Endothelial cell of umbilical vein (primary cell): ENCODE measurements at regions of chr1 and their contacts with region 1.

Region 1: GRCh38 chr1:9004700-9005394 is 21.4 kb downstream of the SLC2A7 start:
- DNase-seq: peak; percentile 85
- H3K4me3 ChIP-seq: no peak overlapping the region
- H3K27ac ChIP-seq: no peak overlapping the region
- H3K4me1 ChIP-seq: no peaks in the 10 kb centered on the region
- H3K27me3 ChIP-seq: peaks cover 0 to 4% of the 10 kb centered on the region in 2 experiments
- CTCF ChIP-seq: peak; percentile 91 to 96
- POLR2A ChIP-seq: no peak

Region 2: DNA sequence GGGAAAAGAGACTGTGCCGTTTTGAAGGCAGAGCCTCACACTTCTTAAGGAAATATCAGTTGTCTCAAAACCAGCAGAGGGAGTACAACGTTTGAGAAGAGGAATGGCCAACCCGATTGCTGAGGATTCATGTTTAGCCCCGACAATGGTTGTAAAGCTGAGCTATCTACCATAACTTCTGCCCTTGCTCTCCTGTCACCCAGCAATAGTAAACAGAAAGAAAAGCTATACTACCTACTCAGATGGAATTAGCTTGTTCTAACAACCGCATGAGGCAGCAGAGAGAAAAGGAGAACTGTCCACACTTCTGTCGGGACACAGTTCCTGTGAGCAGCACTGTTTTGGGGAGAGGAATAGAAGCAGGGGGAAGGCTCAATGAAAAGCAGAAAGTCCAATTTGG is 595.7 kb before region 1 on chr1:
- CTCF ChIA-PET with region 1: no interaction called
- POLR2A ChIA-PET with region 1: no interaction called
- dilution Hi-C with region 1: no loop called
- intact Hi-C with region 1: no loop called
- DNase-seq: peak; percentile 76
- H3K4me3 ChIP-seq: no peak overlapping the region
- H3K27ac ChIP-seq: peak overlapping the region; percentile 62
- H3K4me1 ChIP-seq: peaks cover 53% of the 10 kb centered on the region
- H3K27me3 ChIP-seq: no peaks in the 10 kb centered on the region
- CTCF ChIP-seq: peak; percentile 37 to 42
- POLR2A ChIP-seq: no peak

Region 3: DNA sequence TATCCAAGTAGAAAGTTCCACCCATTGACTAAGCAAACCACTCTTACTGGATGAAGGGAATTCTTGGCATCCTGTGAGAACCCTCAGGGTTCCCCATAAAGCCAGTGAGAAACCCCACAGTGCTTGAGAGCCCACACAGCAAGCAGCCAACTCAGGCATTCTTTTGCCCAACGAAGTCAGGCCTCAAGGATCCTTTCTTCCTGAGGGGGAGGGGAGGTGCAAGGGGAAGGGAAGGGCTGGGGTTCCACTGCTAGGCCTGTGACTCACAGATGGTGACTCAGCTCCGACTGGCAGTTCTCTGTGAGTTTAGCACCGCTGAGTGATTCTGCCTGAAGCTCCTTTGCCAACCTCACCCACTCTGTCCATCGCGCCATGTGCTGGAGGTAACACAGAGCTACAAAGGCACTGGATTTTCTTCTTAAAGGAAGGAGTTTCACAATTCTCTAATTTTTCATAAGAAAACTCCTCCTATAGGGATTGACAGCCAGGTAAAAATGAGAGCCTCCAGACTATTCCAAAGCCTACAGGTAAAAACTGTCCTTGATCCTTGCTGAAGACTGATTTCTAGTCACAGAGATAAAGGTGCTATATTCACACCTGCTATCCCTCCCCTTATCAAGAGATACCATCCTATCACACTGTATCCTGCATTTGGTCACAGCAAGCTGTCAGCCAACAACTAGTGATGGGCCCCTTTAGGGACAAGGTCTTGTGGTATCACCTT is 131.2 kb before region 1 on chr1:
- CTCF ChIA-PET with region 1: interaction called, 23 read pairs
- POLR2A ChIA-PET with region 1: no interaction called
- dilution Hi-C with region 1: no loop called
- intact Hi-C with region 1: no loop called
- DNase-seq: peak; percentile 97
- H3K4me3 ChIP-seq: peak overlapping the region in 1 of 3 experiments; percentile 25
- H3K27ac ChIP-seq: peak overlapping the region; percentile 48
- H3K4me1 ChIP-seq: peaks cover 50% of the 10 kb centered on the region
- H3K27me3 ChIP-seq: no peaks in the 10 kb centered on the region
- CTCF ChIP-seq: no peak
- POLR2A ChIP-seq: peak; percentile 58

Region 4: GRCh38 chr1:8925406-8925805 is 79.4 kb before region 1 on chr1:
- CTCF ChIA-PET with region 1: interaction called, 371 read pairs
- POLR2A ChIA-PET with region 1: no interaction called
- dilution Hi-C with region 1: no loop called
- intact Hi-C with region 1: no loop called
- DNase-seq: no peak
- H3K4me3 ChIP-seq: no peak overlapping the region
- H3K27ac ChIP-seq: no peak overlapping the region
- H3K4me1 ChIP-seq: no peaks in the 10 kb centered on the region
- H3K27me3 ChIP-seq: peaks cover 4 to 14% of the 10 kb centered on the region in 2 experiments
- CTCF ChIP-seq: no peak
- POLR2A ChIP-seq: no peak

Region 5: DNA sequence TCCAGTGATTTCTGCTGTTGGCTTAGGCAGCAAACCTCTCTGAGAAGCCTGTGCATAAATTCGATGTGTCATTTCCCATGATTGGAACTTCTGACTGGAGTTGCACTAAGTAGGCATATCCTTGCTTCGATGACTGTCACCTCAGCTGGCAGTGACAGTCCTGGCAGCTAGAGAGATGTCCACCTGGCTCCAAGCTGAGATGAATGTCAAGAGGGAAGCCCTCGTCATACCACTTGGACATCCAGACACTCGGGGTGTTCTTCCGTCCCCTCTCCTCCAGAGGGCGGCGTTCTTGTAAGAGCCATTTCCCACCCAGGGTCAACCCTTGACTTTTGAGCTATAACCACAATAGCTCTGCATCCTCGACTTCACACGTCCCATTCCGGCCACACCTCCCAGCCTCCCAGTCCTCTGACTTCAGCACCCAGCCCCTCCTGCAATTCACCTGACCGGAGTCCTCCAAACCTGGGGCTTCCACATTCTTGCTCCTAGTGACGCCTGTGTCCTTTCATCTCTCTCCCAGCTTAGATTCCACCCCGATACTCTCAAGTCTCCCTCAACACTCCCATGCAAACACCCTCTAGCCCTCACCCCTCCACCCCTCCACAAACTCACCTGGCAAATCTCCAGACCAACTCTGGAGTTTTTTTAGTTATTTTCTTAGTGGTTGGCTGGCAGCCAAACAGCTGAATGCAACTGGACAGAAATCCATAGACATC is 41.9 kb before region 1 on chr1:
- CTCF ChIA-PET with region 1: interaction called, 55 read pairs
- POLR2A ChIA-PET with region 1: no interaction called
- dilution Hi-C with region 1: no loop called
- intact Hi-C with region 1: loop called (anchors 5 kb)
- DNase-seq: peak; percentile 40
- H3K4me3 ChIP-seq: no peak overlapping the region
- H3K27ac ChIP-seq: no peak overlapping the region
- H3K4me1 ChIP-seq: peaks cover 3% of the 10 kb centered on the region
- H3K27me3 ChIP-seq: no peaks in the 10 kb centered on the region
- CTCF ChIP-seq: peak; percentile 50 to 62
- POLR2A ChIP-seq: no peak

Region 6: GRCh38 chr1:9048551-9048950 is 43.7 kb after region 1 on chr1:
- CTCF ChIA-PET with region 1: interaction called, 13 read pairs
- POLR2A ChIA-PET with region 1: no interaction called
- dilution Hi-C with region 1: no loop called
- intact Hi-C with region 1: no loop called
- DNase-seq: no peak
- H3K4me3 ChIP-seq: no peak overlapping the region
- H3K27ac ChIP-seq: no peak overlapping the region
- H3K4me1 ChIP-seq: no peaks in the 10 kb centered on the region
- H3K27me3 ChIP-seq: peaks cover 6% of the 10 kb centered on the region in 2 experiments
- CTCF ChIP-seq: no peak
- POLR2A ChIP-seq: no peak

Region 7: DNA sequence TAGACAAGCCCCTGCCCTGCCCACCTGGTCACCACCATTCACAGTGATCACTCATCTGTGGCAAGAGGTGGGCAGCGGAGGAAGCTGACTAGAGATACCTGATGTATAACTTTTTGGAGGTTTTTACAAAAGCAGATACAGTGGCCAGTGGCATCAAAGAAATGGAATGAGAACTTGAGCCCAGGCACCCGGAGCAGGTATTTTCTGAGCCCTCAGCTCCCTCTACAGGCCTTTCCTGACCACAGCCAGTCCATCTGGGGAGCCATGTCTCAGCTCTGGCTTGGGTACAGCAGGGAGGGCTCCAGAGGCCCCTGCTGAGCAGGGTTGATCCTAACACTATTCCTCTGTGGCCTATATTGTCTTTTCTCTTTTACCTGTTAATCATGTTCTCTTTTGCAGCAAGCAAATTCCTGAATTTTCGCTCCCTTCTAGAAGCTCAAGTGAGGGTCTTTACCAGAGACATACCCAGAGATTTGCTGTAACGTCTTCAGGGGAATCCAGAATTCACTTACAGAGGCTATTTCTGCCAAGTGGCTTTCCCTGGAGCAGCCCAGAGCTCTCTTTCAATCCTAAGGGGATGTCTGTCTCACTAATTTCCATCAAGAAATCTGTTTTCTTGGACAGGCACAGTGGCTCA is 96.8 kb after region 1 on chr1:
- CTCF ChIA-PET with region 1: interaction called, 137 read pairs
- POLR2A ChIA-PET with region 1: no interaction called
- dilution Hi-C with region 1: no loop called
- intact Hi-C with region 1: loop called (anchors 1 kb)
- DNase-seq: peak; percentile 51
- H3K4me3 ChIP-seq: no peak overlapping the region
- H3K27ac ChIP-seq: no peak overlapping the region
- H3K4me1 ChIP-seq: no peaks in the 10 kb centered on the region
- H3K27me3 ChIP-seq: no peaks in the 10 kb centered on the region
- CTCF ChIP-seq: peak; percentile 64 to 80
- POLR2A ChIP-seq: no peak

Region 8: DNA sequence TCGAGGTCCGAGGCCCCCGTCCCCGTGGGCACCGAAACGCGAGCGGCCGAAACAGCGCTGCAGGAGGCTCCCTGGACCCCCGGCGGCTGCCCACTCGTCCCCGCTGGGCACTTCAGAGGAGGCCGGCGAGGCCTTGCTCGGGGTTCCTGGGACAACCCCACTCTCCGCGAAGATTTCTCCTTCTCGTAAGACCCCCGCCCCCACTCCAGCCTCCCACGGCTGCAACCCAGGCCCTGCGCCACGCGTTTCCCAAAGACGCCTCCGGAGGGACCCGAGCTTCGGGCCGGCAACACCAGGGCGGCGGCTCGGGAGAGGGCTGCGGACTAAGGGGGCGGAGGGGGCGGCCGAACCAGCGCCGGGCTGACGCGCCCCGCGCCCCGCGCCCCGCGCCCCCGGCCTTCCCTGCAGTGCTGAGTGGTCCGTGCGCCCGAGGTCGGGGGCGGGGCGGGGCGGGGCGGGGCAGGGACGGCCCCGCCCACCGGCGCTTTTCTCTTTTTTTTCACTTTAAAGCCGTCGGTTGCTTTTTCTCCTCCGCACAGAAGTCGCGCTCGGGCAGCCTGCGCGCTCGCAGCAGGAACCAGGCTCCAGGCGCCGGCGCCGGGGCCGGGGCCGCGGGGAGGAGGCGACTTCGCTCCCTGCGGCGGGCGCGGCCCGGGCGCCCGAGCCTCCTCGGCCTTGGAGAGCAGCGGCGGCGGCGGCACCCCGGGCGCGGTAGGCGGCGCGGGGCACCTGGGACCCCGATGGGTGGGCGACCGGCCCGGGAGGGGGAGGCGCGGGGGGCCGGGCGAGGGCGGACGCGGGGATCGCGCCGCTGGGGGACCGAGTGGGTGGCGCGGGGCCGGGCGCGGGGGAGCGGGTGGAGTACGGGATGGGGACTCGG is 287.8 kb after region 1 on chr1 and contains the start of gene SPSB1:
- CTCF ChIA-PET with region 1: no interaction called
- POLR2A ChIA-PET with region 1: no interaction called
- dilution Hi-C with region 1: no loop called
- intact Hi-C with region 1: no loop called
- DNase-seq: peak; percentile 79
- H3K4me3 ChIP-seq: peak within 1 kb of the TSS; percentile 38 to 67 (median 64)
- H3K27ac ChIP-seq: peak within 1 kb of the TSS; percentile 54
- H3K4me1 ChIP-seq: peaks cover 15% of the 10 kb centered on the region
- H3K27me3 ChIP-seq: no peaks in the 10 kb centered on the region
- CTCF ChIP-seq: no peak
- POLR2A ChIP-seq: peak; percentile 92
- total RNA-seq, gene SPSB1: 41.9 and 50.9 TPM in 2 replicates

Region 9: GRCh38 chr1:9351654-9352271 is 346.9 kb after region 1 on chr1:
- CTCF ChIA-PET with region 1: no interaction called
- POLR2A ChIA-PET with region 1: no interaction called
- dilution Hi-C with region 1: no loop called
- intact Hi-C with region 1: no loop called
- DNase-seq: no peak
- H3K4me3 ChIP-seq: no peak overlapping the region
- H3K27ac ChIP-seq: no peak overlapping the region
- H3K4me1 ChIP-seq: no peaks in the 10 kb centered on the region
- H3K27me3 ChIP-seq: no peaks in the 10 kb centered on the region
- CTCF ChIP-seq: no peak
- POLR2A ChIP-seq: no peak

Region 10: GRCh38 chr1:9362488-9362887 is 357.6 kb after region 1 on chr1:
- CTCF ChIA-PET with region 1: no interaction called
- POLR2A ChIA-PET with region 1: no interaction called
- dilution Hi-C with region 1: no loop called
- intact Hi-C with region 1: no loop called
- DNase-seq: no peak
- H3K4me3 ChIP-seq: no peak overlapping the region
- H3K27ac ChIP-seq: no peak overlapping the region
- H3K4me1 ChIP-seq: peaks cover 17% of the 10 kb centered on the region
- H3K27me3 ChIP-seq: no peaks in the 10 kb centered on the region
- CTCF ChIP-seq: no peak
- POLR2A ChIP-seq: no peak